Activated naive CD4-positive, alpha-beta T cell treated with anti-CD3 and anti-CD28 coated beads for 36 hours (primary cell): ENCODE measurements at regions of chr2 and their contacts with region 1.

Region 1: GRCh38 chr2:42828487-42829425 is 36.4 kb upstream of the HAAO start:
- DNase-seq: peak; percentile 78
- H3K4me3 Mint-ChIP-seq: no peak overlapping the region
- H3K27ac Mint-ChIP-seq: no peak overlapping the region
- H3K4me1 Mint-ChIP-seq: peaks cover 16% of the 10 kb centered on the region
- H3K27me3 Mint-ChIP-seq: no peaks in the 10 kb centered on the region

Region 2: GRCh38 chr2:42754021-42754775 is 74.6 kb before region 1 on chr2:
- CTCF ChIA-PET with region 1: no interaction called
- intact Hi-C with region 1: no loop called
- DNase-seq: no peak
- H3K4me3 Mint-ChIP-seq: no peak overlapping the region
- H3K27ac Mint-ChIP-seq: no peak overlapping the region
- H3K4me1 Mint-ChIP-seq: no peaks in the 10 kb centered on the region
- H3K27me3 Mint-ChIP-seq: no peaks in the 10 kb centered on the region

Region 3: DNA sequence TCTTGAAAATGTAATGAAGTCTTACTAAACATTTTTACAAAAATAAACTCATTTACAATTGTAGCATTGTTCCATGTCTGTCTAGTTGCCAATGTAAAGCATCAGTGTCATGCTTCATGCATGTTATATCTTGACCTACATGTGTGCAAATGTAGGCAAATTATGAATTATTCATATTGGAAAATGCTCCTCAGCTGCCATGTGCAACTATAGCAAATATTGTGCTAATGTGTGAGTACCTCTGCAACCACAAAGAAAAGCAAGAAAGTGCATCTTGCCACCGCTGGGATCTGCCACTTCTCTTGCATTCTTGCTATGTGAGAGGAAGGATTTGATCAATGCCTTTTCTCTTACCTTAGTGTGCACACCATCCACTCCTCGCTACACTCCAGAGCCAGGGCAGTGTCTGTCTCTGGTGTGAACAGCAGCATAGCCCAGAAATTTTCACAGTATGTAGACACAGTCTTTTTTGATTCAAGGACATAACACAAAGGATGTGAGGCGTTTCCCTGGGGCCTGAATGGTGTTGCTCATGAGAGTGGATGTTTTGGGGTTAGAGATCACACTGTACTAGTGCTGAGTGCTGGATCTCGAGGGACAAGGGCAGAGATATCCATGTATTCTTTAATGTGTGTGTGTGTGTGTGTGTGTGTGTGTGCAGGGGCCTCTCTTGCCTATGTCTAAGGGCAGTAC is 11.2 kb after region 1 on chr2:
- CTCF ChIA-PET with region 1: interaction called, 22 read pairs
- intact Hi-C with region 1: no loop called
- DNase-seq: no peak
- H3K4me3 Mint-ChIP-seq: no peak overlapping the region
- H3K27ac Mint-ChIP-seq: no peak overlapping the region
- H3K4me1 Mint-ChIP-seq: no peaks in the 10 kb centered on the region
- H3K27me3 Mint-ChIP-seq: no peaks in the 10 kb centered on the region

Region 4: GRCh38 chr2:42928692-42929545 is 100.2 kb after region 1 on chr2:
- CTCF ChIA-PET with region 1: interaction called, 6 read pairs
- intact Hi-C with region 1: loop called (anchors 5 kb)
- DNase-seq: peak; percentile 36
- H3K4me3 Mint-ChIP-seq: no peak overlapping the region
- H3K27ac Mint-ChIP-seq: no peak overlapping the region
- H3K4me1 Mint-ChIP-seq: no peaks in the 10 kb centered on the region
- H3K27me3 Mint-ChIP-seq: no peaks in the 10 kb centered on the region

Region 5: DNA sequence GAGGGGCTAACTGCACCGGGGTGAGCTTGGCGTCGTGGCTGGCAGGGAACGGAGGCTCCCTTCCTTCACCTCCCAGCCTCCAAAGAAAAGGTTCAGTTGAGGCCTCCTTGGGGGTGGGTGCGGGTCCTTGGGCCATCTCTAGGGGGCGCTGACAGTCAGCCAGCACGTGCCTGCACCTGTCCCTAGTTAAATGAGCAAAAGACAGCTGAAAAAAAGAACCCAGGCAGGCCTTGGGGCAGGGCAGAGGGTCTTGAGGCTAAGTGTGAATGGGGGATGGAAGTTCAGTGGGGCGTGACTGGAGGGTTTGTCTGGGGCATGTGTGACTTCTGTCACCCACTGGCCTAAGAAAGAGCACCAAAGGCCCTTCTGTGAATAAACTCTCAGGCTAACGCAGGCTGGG is 341.2 kb after region 1 on chr2:
- CTCF ChIA-PET with region 1: no interaction called
- intact Hi-C with region 1: loop called (anchors 2 kb)
- DNase-seq: peak; percentile 89
- H3K4me3 Mint-ChIP-seq: peak overlapping the region; percentile 42
- H3K27ac Mint-ChIP-seq: peak overlapping the region; percentile 61
- H3K4me1 Mint-ChIP-seq: peaks cover 81% of the 10 kb centered on the region
- H3K27me3 Mint-ChIP-seq: no peaks in the 10 kb centered on the region

Region 6: DNA sequence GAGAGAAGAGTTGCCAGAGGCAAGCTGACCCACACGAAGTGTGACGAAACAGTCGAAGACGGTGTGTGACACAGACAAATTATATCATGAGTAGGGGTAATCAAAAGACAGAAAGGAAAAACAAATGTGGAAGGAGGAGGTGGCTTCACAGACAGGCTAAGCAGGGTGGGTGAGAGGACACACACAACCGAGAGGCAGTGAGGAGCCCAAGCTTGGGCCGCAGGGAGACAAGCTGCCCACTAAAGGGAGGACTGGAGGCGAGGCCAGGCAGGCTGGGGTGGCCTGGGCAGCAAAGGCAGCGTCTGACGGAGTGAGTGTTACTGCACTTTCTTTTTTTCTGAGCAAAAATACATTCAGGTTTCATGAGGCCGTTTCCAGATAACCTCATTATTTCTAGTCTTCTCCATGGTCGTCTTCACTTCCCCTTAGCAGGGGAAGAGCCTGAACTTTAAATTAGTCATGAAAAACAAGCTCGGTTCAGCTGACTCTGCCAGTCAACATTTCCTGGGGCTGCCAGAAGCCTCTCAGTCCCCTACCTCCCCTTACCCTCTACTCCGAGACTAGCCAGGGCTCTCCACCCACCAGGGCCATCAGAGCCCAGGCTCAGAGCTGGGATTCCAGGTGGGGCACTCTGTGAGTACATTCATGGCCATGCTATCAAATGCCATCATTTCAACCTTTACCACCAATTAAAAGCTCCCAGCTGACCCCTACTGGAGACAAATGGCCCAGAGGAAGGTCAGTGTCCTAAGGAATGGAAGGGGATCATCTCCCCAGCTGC is 411.4 kb after region 1 on chr2:
- CTCF ChIA-PET with region 1: no interaction called
- intact Hi-C with region 1: no loop called
- DNase-seq: no peak
- H3K4me3 Mint-ChIP-seq: no peak overlapping the region
- H3K27ac Mint-ChIP-seq: no peak overlapping the region
- H3K4me1 Mint-ChIP-seq: peaks cover 8% of the 10 kb centered on the region
- H3K27me3 Mint-ChIP-seq: no peaks in the 10 kb centered on the region

Region 7: GRCh38 chr2:43278337-43279220 is 449.8 kb after region 1 on chr2:
- CTCF ChIA-PET with region 1: no interaction called
- intact Hi-C with region 1: no loop called
- DNase-seq: no peak
- H3K4me3 Mint-ChIP-seq: no peak overlapping the region
- H3K27ac Mint-ChIP-seq: no peak overlapping the region
- H3K4me1 Mint-ChIP-seq: peaks cover 2% of the 10 kb centered on the region
- H3K27me3 Mint-ChIP-seq: no peaks in the 10 kb centered on the region

Region 8: DNA sequence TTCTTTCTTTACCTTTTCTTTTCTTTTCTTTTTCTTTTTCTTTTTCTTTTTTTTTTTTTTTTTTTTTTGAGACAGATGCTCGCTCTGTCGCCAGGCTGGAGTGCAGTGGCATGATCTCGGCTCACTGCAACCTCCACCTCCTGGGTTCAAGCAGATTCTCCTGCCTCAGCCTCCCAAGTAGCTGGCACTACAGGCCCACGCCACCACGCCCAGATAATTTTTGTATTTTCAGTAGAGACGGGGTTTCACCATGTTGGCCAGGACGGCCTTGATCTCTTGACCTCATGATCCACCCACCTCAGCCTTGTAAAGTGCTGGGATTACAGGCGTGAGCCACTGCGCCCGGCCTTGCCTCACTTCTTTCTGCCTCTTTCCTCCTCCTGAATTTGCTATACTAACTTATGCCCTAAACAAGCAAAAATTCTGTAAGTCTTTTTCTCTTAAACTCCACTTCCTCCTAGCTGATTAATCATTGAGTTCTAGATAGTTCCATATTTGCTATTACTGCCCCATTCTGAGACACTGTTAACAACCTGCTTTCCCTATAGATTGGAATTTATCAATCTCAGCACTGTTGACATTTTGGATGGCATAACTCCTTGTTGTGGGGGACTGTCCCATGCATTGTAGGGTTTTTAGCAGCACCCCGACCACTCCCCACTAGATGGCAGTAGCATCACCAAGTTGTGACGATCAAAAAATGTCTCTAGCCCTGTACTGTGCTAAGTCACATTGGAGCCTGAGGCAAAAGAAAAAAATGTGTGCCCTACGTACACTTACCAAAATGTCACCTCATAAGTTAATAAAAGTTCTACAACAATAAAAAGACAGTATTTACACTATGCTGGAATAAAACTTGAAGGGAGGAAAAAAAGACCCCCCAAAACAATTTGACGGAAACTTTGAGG is 783.5 kb after region 1 on chr2:
- CTCF ChIA-PET with region 1: no interaction called
- intact Hi-C with region 1: loop called (anchors 2 kb)
- DNase-seq: peak; percentile 91
- H3K4me3 Mint-ChIP-seq: no peak overlapping the region
- H3K27ac Mint-ChIP-seq: no peak overlapping the region
- H3K4me1 Mint-ChIP-seq: no peaks in the 10 kb centered on the region
- H3K27me3 Mint-ChIP-seq: peaks cover 3% of the 10 kb centered on the region